CD4-positive, alpha-beta T cell (primary cell): ENCODE measurements at regions of chr12 and their contacts with region 1.

Region 1: GRCh38 chr12:89524541-89525285 is at the start of gene GALNT4:
- DNase-seq: peak; percentile 57 to 88 (median 68)
- ATAC-seq: peak; percentile 67
- H3K4me3 ChIP-seq: peak within 1 kb of the TSS; percentile 85
- H3K4me3 Mint-ChIP-seq: peak within 1 kb of the TSS; percentile 95
- H3K27ac ChIP-seq: peak within 1 kb of the TSS; percentile 80 to 84
- H3K27ac Mint-ChIP-seq: peak within 1 kb of the TSS; percentile 47
- H3K4me1 ChIP-seq: peaks cover 24% of the 10 kb centered on the region
- H3K4me1 Mint-ChIP-seq: peaks cover 58% of the 10 kb centered on the region
- H3K27me3 ChIP-seq: no peaks in the 10 kb centered on the region
- H3K27me3 Mint-ChIP-seq: no peaks in the 10 kb centered on the region
- CTCF ChIP-seq: peak; percentile 62
- total RNA-seq, gene GALNT4: 6.2 to 6.3 TPM

Region 2: GRCh38 chr12:88111074-88111652 is 1413.5 kb before region 1 on chr12:
- CTCF ChIA-PET with region 1: no interaction called
- POLR2A ChIA-PET with region 1: no interaction called
- intact Hi-C with region 1: loop called in 1 of 2 experiments (anchors 2 kb)
- DNase-seq: peak in 3 of 14 experiments; percentile 45 to 52 (median 46)
- ATAC-seq: no peak
- H3K4me3 ChIP-seq: no peak overlapping the region
- H3K4me3 Mint-ChIP-seq: no peak overlapping the region
- H3K27ac ChIP-seq: no peak overlapping the region
- H3K27ac Mint-ChIP-seq: no peak overlapping the region
- H3K4me1 ChIP-seq: no peaks in the 10 kb centered on the region
- H3K4me1 Mint-ChIP-seq: no peaks in the 10 kb centered on the region
- H3K27me3 ChIP-seq: no peaks in the 10 kb centered on the region
- H3K27me3 Mint-ChIP-seq: no peaks in the 10 kb centered on the region
- CTCF ChIP-seq: peak; percentile 44

Region 3: DNA sequence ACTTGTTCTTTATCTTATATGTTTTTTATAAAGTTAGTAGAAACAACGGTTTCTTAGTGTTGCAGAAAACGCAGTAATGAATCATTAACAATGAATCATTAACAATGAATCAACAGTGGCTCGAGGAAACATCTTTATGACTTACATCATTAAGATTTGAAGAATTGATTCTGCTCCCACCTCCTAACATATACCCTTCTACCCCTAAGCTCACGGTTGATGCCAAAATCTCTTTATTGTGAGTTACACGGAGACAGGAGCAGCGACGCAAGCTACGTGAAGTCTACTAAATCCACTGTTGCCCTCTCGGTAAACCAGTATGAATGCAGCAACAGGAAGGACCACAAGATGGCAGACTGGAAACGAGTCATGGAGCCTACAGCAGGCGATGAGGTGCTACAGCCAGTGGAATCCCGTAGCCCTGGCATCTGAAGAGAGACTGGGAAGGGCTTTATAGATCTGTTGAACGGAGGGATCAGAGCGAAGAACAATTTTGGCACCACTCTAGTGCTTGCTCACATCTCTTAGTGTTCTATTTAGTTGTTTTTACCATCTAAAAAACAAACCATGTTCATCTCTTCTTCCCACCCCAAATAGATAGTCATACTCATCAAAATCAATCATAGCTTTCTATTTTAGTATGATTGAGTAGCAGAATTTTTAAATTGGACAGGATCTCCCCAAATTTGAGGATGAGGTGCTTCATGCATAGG is 505.1 kb before region 1 on chr12:
- CTCF ChIA-PET with region 1: interaction called, 13 read pairs
- POLR2A ChIA-PET with region 1: interaction called, 3 read pairs
- intact Hi-C with region 1: loop called (anchors 1 kb)
- DNase-seq: peak; percentile 48 to 86 (median 58)
- ATAC-seq: peak; percentile 98
- H3K4me3 ChIP-seq: peak overlapping the region; percentile 24
- H3K4me3 Mint-ChIP-seq: no peak overlapping the region
- H3K27ac ChIP-seq: no peak overlapping the region
- H3K27ac Mint-ChIP-seq: no peak overlapping the region
- H3K4me1 ChIP-seq: peaks cover 5% of the 10 kb centered on the region
- H3K4me1 Mint-ChIP-seq: no peaks in the 10 kb centered on the region
- H3K27me3 ChIP-seq: no peaks in the 10 kb centered on the region
- H3K27me3 Mint-ChIP-seq: peaks cover 6% of the 10 kb centered on the region
- CTCF ChIP-seq: peak; percentile 90

Region 4: DNA sequence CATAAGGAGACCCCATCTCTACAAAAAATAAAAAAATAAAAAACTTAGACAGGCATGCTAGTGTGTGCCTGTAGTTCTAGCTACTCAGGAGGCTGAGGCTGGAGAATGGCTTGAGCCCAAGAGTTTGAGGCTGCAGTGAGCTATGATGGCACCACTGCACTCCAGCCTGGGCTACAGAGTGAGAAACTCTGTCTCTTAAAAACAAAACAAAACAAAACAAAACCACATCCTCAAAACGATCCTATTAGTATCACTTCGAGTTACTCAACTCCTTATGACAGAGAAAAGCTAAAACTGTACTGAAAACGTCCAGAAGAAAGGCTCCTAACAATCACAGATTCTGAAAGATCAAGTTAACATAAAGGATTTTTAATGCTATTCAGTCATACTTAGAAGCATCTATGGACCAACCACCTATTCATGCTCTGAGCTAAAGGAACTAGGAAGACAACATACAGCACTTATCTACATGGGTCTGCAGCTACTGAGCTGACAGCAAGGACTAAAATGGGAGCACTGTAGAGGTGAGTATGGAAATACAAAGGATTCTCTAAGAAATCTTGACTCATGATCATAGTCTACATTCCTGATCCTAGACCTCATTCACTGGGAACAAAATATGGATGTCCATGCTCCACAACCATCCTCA is 97.1 kb before region 1 on chr12:
- CTCF ChIA-PET with region 1: no interaction called
- POLR2A ChIA-PET with region 1: no interaction called
- intact Hi-C with region 1: no loop called
- DNase-seq: peak in 2 of 14 experiments; percentile 10 to 59
- ATAC-seq: peak; percentile 48
- H3K4me3 ChIP-seq: no peak overlapping the region
- H3K4me3 Mint-ChIP-seq: peak overlapping the region; percentile 58
- H3K27ac ChIP-seq: peak overlapping the region in 1 of 2 donors; percentile 2
- H3K27ac Mint-ChIP-seq: peak overlapping the region; percentile 9
- H3K4me1 ChIP-seq: peaks cover 13% of the 10 kb centered on the region
- H3K4me1 Mint-ChIP-seq: peaks cover 34% of the 10 kb centered on the region
- H3K27me3 ChIP-seq: no peaks in the 10 kb centered on the region
- H3K27me3 Mint-ChIP-seq: no peaks in the 10 kb centered on the region
- CTCF ChIP-seq: no peak

Region 5: GRCh38 chr12:89470741-89471509 is 53.8 kb before region 1 on chr12:
- CTCF ChIA-PET with region 1: interaction called, 7 read pairs
- POLR2A ChIA-PET with region 1: interaction called, 25 read pairs
- intact Hi-C with region 1: loop called (anchors 1 to 2 kb)
- DNase-seq: peak in 4 of 14 experiments; percentile 26 to 73 (median 72)
- ATAC-seq: peak; percentile 69
- H3K4me3 ChIP-seq: no peak overlapping the region
- H3K4me3 Mint-ChIP-seq: no peak overlapping the region
- H3K27ac ChIP-seq: no peak overlapping the region
- H3K27ac Mint-ChIP-seq: peak overlapping the region; percentile 57
- H3K4me1 ChIP-seq: peaks cover 22% of the 10 kb centered on the region
- H3K4me1 Mint-ChIP-seq: peaks cover 51% of the 10 kb centered on the region
- H3K27me3 ChIP-seq: no peaks in the 10 kb centered on the region
- H3K27me3 Mint-ChIP-seq: no peaks in the 10 kb centered on the region
- CTCF ChIP-seq: peak; percentile 64